ENCODE measurements at regions of chr16 and their contacts with region 1.

Region 1: GRCh38 chr16:21641916-21642315 is 10.5 kb downstream of the IGSF6 start:
- DNase-seq: no peak
- ATAC-seq: no peak
- H3K4me3 ChIP-seq: no peak overlapping the region
- H3K4me3 Mint-ChIP-seq: no peak overlapping the region
- H3K27ac ChIP-seq: no peak overlapping the region
- H3K27ac Mint-ChIP-seq: no peak overlapping the region
- H3K4me1 ChIP-seq: peaks cover 30% of the 10 kb centered on the region
- H3K4me1 Mint-ChIP-seq: peaks cover 39 to 45% of the 10 kb centered on the region in 2 donors
- H3K27me3 ChIP-seq: no peaks in the 10 kb centered on the region
- H3K27me3 Mint-ChIP-seq: no peaks in the 10 kb centered on the region
- CTCF ChIP-seq: no peak

Region 2: GRCh38 chr16:23060458-23061320 is 1418.8 kb after region 1 on chr16:
- intact Hi-C with region 1: loop called (anchors 2 kb)
- DNase-seq: peak; percentile 32 to 73
- ATAC-seq: peak; percentile 68 to 91 (median 74)
- H3K4me3 ChIP-seq: no peak overlapping the region
- H3K4me3 Mint-ChIP-seq: no peak overlapping the region
- H3K27ac ChIP-seq: no peak overlapping the region
- H3K27ac Mint-ChIP-seq: no peak overlapping the region
- H3K4me1 ChIP-seq: no peaks in the 10 kb centered on the region
- H3K4me1 Mint-ChIP-seq: peaks cover 0 to 5% of the 10 kb centered on the region in 2 donors
- H3K27me3 ChIP-seq: no peaks in the 10 kb centered on the region
- H3K27me3 Mint-ChIP-seq: peaks cover 9 to 19% of the 10 kb centered on the region in 2 donors
- CTCF ChIP-seq: peak; percentile 77

Measured in natural killer cell (primary cell).